ENCODE measurements at regions of chr9 and their contacts with region 1.

Region 1: GRCh38 chr9:130172161-130172857 is at the start of gene NCS1:
- DNase-seq: no peak
- H3K4me3 ChIP-seq: peak within 1 kb of the TSS; percentile 69 to 97
- H3K27ac ChIP-seq: peak within 1 kb of the TSS; percentile 88
- H3K4me1 ChIP-seq: peaks cover 33% of the 10 kb centered on the region
- H3K27me3 ChIP-seq: no peaks in the 10 kb centered on the region
- CTCF ChIP-seq: no peak
- POLR2A ChIP-seq: no peak
- total RNA-seq, gene NCS1: 20.4 TPM

Region 2: DNA sequence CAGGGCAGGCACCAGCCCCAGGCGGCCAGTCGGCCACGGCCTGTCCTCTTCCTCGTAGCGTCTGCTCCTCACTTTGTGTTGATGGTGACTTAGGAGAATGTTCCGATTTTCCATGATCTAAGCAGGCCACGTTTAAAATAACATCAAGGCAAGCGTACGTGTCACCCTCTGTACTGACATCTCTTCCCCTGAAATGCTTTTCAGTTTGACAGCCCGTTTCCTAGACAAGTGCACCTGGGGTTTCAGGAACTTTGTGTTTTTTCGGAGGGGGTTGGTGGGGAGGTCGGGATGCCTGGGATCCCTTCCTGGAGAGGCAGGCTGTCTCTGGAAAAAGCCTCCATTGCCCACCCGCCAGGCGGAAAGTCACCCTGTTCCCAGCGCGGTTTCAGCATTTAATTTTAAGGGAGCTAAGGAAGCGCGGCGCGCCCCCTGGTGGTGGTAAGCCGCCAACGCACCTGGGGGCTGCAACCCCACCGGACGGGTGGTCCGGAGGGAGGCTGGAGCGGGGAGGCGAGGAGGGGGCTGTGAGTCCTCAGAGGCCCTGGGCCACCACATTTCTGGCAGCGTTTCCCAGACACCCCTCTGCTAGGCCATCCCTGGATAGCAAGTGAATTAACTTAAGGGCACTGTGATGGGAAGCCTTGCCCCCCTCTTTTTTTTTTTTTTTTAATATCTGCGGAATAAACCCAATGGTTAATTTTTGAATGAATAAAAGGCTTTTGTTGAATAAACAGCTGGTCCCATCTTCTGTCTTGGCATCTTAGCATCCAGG is 63.8 kb after region 1 on chr9:
- intact Hi-C with region 1: loop called (anchors 5 kb)
- DNase-seq: no peak
- H3K4me3 ChIP-seq: no peak overlapping the region
- H3K27ac ChIP-seq: peak overlapping the region; percentile 24
- H3K4me1 ChIP-seq: peaks cover 23% of the 10 kb centered on the region
- H3K27me3 ChIP-seq: no peaks in the 10 kb centered on the region
- CTCF ChIP-seq: peak; percentile 98 to 100 (median 99)
- POLR2A ChIP-seq: no peak

Region 3: DNA sequence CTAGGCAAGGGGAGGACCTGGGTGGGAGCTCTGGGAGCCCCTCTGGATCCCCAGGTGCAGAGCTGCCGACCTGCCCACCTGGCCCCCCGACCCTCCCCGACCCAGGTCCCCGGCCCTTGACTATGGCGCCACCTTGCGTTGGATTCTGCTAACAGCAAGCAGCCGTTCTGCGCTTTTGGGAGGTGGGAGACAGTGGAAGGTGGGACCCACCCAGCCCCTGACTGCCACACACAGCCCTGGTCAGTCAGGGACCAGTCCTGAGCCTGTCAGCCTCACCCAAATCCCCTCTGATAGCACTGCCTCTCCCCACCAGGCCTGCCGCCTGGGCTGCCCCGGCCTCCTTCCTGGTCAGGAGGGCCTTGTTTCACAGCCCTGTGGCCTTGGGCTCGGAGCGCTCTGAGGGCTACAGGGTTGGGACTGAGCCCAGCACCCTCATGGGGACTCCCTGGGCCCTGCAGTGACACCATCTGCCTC is 171.2 kb after region 1 on chr9:
- intact Hi-C with region 1: loop called (anchors 10 kb)
- DNase-seq: no peak
- H3K4me3 ChIP-seq: no peak overlapping the region
- H3K27ac ChIP-seq: no peak overlapping the region
- H3K4me1 ChIP-seq: no peaks in the 10 kb centered on the region
- H3K27me3 ChIP-seq: no peaks in the 10 kb centered on the region
- CTCF ChIP-seq: peak; percentile 62 to 85 (median 73)
- POLR2A ChIP-seq: no peak

Region 4: DNA sequence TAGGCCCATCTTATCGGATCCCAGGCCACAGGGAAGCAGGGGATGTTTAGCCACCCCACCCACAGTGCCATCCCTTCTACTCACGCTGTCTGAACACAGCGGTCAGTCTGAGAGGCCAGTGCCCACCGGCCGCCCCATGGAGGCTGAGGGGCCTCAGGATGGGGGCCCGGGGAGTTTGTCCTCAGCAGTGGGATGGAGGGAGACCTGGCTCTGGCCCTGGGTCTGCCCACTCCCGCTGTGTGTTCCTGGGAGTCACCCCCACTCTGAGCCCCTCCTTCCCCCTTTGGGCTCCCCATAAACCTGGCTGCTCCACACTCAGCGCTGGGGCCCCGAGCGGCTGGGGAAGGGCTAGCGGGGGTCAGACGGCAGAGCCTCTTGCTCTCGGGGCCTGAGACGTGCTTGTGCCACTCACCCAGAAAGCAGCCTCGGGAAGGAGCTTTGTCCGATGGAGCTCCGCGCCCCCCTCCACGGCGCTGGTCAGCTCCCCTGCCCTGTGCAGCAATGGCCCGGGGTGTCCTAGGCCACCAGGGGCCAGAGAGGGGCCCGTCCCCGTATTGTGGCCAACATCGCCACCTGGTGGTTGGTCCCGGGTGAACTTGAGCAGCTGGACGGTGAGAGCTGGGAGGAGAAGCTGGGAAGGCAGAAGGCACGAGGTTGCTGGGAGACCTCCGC is 825.8 kb after region 1 on chr9:
- intact Hi-C with region 1: no loop called
- DNase-seq: no peak
- H3K4me3 ChIP-seq: no peak overlapping the region
- H3K27ac ChIP-seq: no peak overlapping the region
- H3K4me1 ChIP-seq: no peaks in the 10 kb centered on the region
- H3K27me3 ChIP-seq: no peaks in the 10 kb centered on the region
- CTCF ChIP-seq: peak in 1 of 3 experiments; percentile 54
- POLR2A ChIP-seq: no peak

Measured in vagina (tissue), 2 donors.